Ascending aorta (tissue), 2 donors: ENCODE measurements at regions of chr17 and their contacts with region 1.

Region 1: DNA sequence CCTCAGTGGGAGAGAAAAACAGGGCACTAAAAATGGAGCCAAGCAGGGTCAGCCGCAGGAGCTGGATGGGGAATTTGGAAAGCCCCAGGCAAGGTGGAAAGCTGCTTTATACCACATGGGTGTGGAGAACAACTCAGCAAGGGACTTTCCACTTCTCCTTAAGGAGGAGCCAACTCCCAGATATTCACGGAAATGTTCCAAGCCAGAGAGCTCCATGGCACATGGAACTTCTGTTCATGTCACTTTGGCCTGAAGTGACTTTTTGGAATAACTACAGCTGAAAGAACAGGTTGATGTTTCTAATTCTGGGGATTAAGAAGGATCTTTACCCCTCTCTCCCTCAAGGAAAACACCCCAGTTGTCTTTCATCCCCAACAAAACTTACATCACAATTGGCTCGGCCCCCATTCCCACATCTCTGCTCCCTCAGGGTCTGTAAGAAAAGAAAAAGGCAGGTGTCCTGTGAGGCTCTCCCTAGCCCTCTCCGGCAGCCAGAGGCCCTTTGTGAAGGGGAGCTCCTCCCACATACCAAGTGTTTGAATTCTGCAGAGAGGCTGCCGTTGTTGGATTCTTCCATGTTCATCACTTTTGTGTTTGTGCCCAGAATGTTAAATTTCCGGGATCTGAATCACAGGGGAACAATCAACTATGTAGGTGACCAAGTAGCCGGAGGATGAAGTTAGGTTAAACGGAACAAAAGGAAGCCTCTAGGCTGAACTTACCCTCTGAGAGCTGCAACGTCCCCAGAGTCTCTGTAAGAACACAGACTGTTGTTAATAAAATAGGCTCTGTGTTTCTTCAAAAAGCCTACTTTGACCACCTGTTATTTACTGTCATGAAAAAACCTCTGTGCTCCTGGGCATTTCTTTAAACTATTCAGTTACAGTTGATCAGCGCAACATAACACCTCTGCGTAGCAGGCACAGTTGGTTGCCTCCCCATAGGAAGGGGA is 41.0 kb downstream of the STAT5A start:
- DNase-seq: no peak
- H3K4me3 ChIP-seq: no peak overlapping the region
- H3K27ac ChIP-seq: peak overlapping the region; percentile 61 to 64
- H3K4me1 ChIP-seq: peaks cover 0 to 14% of the 10 kb centered on the region in 2 donors
- H3K27me3 ChIP-seq: no peaks in the 10 kb centered on the region
- CTCF ChIP-seq: no peak

Region 2: DNA sequence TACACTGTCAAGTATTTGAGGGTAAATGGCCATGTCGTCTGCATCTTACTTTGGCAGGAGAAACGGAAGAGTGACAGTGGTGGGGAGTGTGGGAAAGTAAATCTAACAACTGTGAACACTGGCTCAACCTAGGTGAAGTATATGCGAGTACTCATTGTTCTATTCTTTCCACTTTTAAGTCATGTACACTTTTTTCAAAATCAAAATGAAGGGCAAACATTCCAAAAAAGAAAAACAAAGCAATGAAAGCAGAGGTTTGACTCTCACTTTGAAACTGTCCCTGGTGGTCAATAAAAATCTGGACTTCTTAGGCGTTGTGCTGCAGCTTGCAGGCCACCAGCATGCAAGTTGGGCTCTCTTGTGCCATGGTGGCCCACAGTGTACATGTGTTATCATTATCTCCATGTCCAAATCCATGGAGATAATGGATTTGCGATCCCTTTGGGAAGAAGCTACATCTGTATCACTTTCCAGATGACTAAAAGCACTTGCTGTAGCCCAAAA is 85.8 kb before region 1 on chr17:
- intact Hi-C with region 1: no loop called
- DNase-seq: no peak
- H3K4me3 ChIP-seq: no peak overlapping the region
- H3K27ac ChIP-seq: no peak overlapping the region
- H3K4me1 ChIP-seq: peaks cover 5 to 6% of the 10 kb centered on the region in 2 donors
- H3K27me3 ChIP-seq: no peaks in the 10 kb centered on the region
- CTCF ChIP-seq: no peak

Region 3: GRCh38 chr17:42361781-42362186 is 32.5 kb after region 1 on chr17:
- intact Hi-C with region 1: loop called (anchors 5 kb)
- DNase-seq: peak in 1 of 2 donors; percentile 54
- H3K4me3 ChIP-seq: no peak overlapping the region
- H3K27ac ChIP-seq: peak overlapping the region; percentile 79 to 88
- H3K4me1 ChIP-seq: peaks cover 21 to 60% of the 10 kb centered on the region in 2 donors
- H3K27me3 ChIP-seq: no peaks in the 10 kb centered on the region
- CTCF ChIP-seq: no peak